ENCODE measurements at regions of chr4 and their contacts with region 1.

Region 1: GRCh38 chr4:6855692-6856297 is 53.8 kb upstream of the TBC1D14 start:
- DNase-seq: no peak

Region 2: GRCh38 chr4:6633041-6633906 is 222.5 kb before region 1 on chr4:
- intact Hi-C with region 1: no loop called
- DNase-seq: peak; percentile 46

Region 3: GRCh38 chr4:6929812-6930464 is 74.1 kb after region 1 on chr4:
- intact Hi-C with region 1: loop called in 1 of 2 experiments (anchors 2 kb)
- DNase-seq: no peak